Caco-2 (cell line): ENCODE measurements at regions of chr15 and their contacts with region 1.

Region 1: GRCh38 chr15:55290528-55291057 is 980 bp upstream of the RAB27A start:
- DNase-seq: peak; percentile 74 to 84
- H3K4me3 ChIP-seq: peak overlapping the region; percentile 86
- H3K4me3 Mint-ChIP-seq: peak overlapping the region; percentile 82
- H3K27ac Mint-ChIP-seq: no peak overlapping the region
- H3K4me1 ChIP-seq: no peaks in the 10 kb centered on the region; the same call in 1 of the 2 replicates
- H3K4me1 Mint-ChIP-seq: no peaks in the 10 kb centered on the region
- H3K27me3 ChIP-seq: no peaks in the 10 kb centered on the region
- H3K27me3 Mint-ChIP-seq: no peaks in the 10 kb centered on the region
- CTCF ChIP-seq: peak; percentile 69 to 90

Region 2: GRCh38 chr15:55196458-55197361 is 93.9 kb before region 1 on chr15 and contains the start of gene RSL24D1:
- CTCF ChIA-PET with region 1: no interaction called
- POLR2A ChIA-PET with region 1: no interaction called
- intact Hi-C with region 1: loop called (anchors 1 kb)
- DNase-seq: peak; percentile 94 to 97
- H3K4me3 ChIP-seq: peak within 1 kb of the TSS; percentile 80
- H3K4me3 Mint-ChIP-seq: no peak within 1 kb of the TSS
- H3K27ac Mint-ChIP-seq: no peak within 1 kb of the TSS
- H3K4me1 ChIP-seq: peaks cover 7% of the 10 kb centered on the region; the same call in 1 of the 2 replicates
- H3K4me1 Mint-ChIP-seq: no peaks in the 10 kb centered on the region
- H3K27me3 ChIP-seq: no peaks in the 10 kb centered on the region
- H3K27me3 Mint-ChIP-seq: no peaks in the 10 kb centered on the region
- CTCF ChIP-seq: peak in 1 of 2 experiments; percentile 37
- total RNA-seq, gene RSL24D1: 122 and 124 TPM in 2 replicates